Left cardiac atrium (tissue), 4 donors: ENCODE measurements at regions of chr2 and their contacts with region 1.

Region 1: DNA sequence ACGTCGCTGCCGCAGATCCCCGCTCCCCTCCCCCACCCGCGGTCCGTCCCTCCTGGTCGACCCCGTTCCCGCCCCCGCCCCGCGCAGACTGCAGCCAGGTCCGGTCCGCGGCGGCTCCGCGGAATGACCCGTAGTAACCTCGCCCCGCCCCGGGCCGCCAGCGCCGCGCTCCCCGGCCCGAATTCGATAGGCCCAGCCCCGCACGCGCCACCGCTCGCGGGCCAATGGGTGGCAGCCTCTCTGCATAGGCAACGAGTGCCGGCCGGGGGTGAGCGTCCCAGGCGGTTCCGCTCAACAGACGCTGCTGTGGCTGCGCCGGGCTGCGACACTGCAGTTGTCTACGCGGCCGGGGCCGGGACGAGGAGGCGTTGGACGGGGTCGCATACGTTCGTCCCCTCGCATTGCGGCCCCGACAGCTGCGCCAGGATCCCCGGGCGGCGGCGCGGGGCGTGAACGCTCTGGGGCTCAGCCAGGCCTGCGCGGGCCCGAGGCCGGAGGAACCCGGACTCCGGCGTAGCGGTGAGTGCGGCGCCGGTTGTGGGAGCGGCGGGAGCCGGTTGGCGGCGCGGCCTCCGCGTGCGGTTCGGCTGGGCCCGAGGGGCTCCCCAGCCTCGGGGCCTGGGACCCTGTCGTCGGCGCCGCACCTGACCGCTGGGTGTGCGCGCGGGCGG is at the start of gene ACSL3:
- DNase-seq: peak; percentile 98
- ATAC-seq: peak; percentile 97 to 98
- total RNA-seq, gene ACSL3: 37.8 to 38.1 TPM

Region 2: DNA sequence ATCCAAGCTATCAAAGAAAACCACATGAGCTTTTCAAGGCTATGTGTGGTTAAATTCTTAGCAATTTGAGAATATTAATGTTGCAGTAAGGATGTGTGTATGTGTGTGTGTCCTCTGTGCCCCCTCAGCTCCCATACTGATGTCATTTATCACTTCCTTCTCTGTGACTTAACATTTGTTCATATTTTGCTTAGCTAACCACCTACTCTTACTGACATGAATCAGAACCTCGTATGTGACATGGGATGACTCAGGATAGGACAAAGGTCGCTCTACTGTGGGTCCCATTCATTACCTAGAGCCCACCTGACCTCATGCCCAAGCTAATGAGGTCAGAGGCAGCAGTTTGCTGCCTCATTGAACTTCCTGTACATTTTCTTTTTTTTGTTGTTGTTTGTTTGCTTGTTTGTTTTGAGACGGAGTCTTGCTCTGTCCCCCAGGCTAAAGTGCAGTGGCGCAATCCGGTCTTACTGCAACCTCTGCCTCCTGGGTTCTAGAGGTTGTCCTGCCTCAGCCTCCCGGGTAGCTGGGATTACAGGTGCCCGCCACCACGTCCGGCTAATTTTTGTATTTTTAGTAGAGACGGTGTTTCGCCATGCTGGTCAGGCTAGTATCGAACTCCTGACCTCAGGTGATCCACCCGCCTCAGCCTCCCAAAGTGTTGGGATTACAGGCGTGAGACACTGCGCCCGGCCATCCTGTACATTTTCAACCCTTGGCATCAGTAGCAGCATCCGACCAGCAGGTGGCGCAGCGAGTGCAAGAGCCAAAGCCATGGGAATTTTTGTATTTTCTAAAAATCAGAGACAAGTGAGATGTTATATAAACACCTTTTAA is 153.0 kb before region 1 on chr2:
- intact Hi-C with region 1: loop called in 1 of 2 experiments (anchors 2 kb)
- DNase-seq: peak; percentile 83
- ATAC-seq: peak; percentile 53 to 61

Region 3: DNA sequence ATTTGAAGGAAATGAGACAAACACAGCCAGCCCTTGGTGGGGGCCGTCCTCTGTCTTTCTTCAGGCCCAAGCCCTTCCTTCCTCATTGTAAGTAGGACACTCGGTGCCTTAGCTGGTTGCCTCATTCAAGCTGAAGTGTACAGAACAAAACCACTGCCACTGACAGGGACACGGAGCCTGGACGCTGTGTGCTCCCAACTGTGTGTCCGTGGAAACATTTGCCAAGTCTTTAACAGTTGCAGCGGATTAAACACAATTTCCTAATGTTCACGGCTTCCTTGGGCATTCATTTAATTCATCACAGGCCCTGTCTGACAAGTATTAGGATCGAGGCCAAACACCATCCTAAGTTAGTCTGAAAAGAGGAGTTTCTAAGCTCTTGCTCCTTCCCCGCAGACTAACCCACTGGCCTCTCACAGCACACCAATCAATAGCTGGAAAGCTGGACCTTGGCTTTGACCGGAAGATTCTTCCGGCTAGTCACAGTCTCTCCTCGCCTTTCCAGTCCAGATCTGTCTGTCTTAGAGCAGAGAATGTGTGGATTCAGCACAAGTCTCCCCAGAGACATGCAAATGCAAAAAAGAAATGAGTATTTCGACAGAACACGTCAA is 68.8 kb before region 1 on chr2:
- intact Hi-C with region 1: loop called in 1 of 2 experiments (anchors 5 kb)
- DNase-seq: peak; percentile 57
- ATAC-seq: peak; percentile 81 to 86